B cell (primary cell): ENCODE measurements at regions of chr17 and their contacts with region 1.

Region 1: GRCh38 chr17:64145757-64146417 is 15.9 kb upstream of the ERN1 start:
- DNase-seq: peak; percentile 98
- ATAC-seq: peak; percentile 93
- H3K4me3 ChIP-seq: peak overlapping the region; percentile 77 to 95 (median 92)
- H3K4me3 Mint-ChIP-seq: no peak overlapping the region
- H3K27ac ChIP-seq: peak overlapping the region; percentile 86 to 88
- H3K27ac Mint-ChIP-seq: no peak overlapping the region
- H3K4me1 ChIP-seq: peaks cover 14 to 18% of the 10 kb centered on the region in 2 donors
- H3K4me1 Mint-ChIP-seq: peaks cover 15% of the 10 kb centered on the region
- H3K27me3 ChIP-seq: no peaks in the 10 kb centered on the region
- H3K27me3 Mint-ChIP-seq: no peaks in the 10 kb centered on the region
- CTCF ChIP-seq: no peak

Region 2: GRCh38 chr17:63773381-63774140 is 372.3 kb before region 1 on chr17 and contains the start of gene CCDC47:
- CTCF ChIA-PET with region 1: no interaction called
- POLR2A ChIA-PET with region 1: interaction called, 9 read pairs
- intact Hi-C with region 1: loop called (anchors 5 kb)
- DNase-seq: peak; percentile 99
- ATAC-seq: peak; percentile 78
- H3K4me3 ChIP-seq: peak within 1 kb of the TSS; percentile 78 to 99 (median 90)
- H3K4me3 Mint-ChIP-seq: peak within 1 kb of the TSS; percentile 98
- H3K27ac ChIP-seq: peak within 1 kb of the TSS; percentile 78 to 94
- H3K27ac Mint-ChIP-seq: peak within 1 kb of the TSS; percentile 99
- H3K4me1 ChIP-seq: peaks cover 28 to 34% of the 10 kb centered on the region in 2 donors
- H3K4me1 Mint-ChIP-seq: peaks cover 51% of the 10 kb centered on the region
- H3K27me3 ChIP-seq: no peaks in the 10 kb centered on the region
- H3K27me3 Mint-ChIP-seq: no peaks in the 10 kb centered on the region
- CTCF ChIP-seq: no peak
- total RNA-seq, gene CCDC47: 36.2 and 39.7 TPM in 2 replicates

Region 3: DNA sequence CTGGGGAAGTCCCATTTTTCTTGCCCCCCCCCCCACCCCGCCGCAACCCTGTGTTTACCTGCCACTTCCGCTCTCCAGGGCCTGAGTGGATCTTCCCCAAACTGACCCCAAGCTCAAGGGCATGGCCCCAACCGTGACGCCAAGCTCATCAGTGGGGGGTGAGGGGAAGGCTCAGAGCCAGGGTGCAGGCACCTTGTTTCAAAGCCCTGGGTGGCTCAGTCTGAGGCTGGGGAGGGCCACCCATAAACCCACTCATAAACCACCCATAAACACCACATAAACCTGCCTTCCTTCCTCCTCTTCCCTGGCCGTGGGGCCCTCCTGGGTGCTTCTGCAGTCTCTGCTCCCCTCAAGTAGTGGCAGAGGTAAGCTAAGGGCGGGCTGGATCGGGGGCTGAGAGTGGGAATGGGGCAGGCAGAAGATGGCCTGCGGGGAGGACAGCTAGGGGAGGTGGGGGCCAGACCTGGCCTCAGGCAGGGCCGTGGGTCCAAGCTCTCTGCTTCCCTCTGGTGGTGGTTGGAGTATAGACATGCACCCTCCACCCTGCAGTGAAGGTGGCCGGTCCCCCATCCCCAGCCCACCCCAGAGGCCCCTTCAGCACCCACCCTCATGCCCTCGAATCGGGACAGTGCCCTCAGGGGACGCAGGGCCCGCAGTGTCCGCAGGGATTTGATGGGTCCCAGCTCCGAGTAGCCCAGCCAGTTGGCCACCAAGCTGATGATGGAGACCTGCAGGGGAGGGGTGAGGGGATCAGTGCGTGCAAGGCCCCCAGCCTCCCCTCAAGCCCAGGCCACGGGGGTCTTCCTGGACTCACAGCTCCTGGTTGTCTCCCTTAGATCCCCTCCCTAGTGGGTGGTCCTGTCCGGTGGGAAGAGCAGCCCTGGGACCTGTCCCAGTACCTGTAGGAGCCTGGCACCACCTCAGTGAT is 199.2 kb before region 1 on chr17:
- CTCF ChIA-PET with region 1: interaction called, 8 read pairs
- POLR2A ChIA-PET with region 1: interaction called, 10 read pairs
- intact Hi-C with region 1: no loop called
- DNase-seq: peak; percentile 87
- ATAC-seq: peak; percentile 70
- H3K4me3 ChIP-seq: peak overlapping the region; percentile 20 to 59 (median 41)
- H3K4me3 Mint-ChIP-seq: peak overlapping the region; percentile 89
- H3K27ac ChIP-seq: peak overlapping the region; percentile 72 to 84
- H3K27ac Mint-ChIP-seq: peak overlapping the region; percentile 99
- H3K4me1 ChIP-seq: peaks cover 35 to 70% of the 10 kb centered on the region in 2 donors
- H3K4me1 Mint-ChIP-seq: peaks cover 46% of the 10 kb centered on the region
- H3K27me3 ChIP-seq: no peaks in the 10 kb centered on the region
- H3K27me3 Mint-ChIP-seq: no peaks in the 10 kb centered on the region
- CTCF ChIP-seq: peak; percentile 92

Region 4: DNA sequence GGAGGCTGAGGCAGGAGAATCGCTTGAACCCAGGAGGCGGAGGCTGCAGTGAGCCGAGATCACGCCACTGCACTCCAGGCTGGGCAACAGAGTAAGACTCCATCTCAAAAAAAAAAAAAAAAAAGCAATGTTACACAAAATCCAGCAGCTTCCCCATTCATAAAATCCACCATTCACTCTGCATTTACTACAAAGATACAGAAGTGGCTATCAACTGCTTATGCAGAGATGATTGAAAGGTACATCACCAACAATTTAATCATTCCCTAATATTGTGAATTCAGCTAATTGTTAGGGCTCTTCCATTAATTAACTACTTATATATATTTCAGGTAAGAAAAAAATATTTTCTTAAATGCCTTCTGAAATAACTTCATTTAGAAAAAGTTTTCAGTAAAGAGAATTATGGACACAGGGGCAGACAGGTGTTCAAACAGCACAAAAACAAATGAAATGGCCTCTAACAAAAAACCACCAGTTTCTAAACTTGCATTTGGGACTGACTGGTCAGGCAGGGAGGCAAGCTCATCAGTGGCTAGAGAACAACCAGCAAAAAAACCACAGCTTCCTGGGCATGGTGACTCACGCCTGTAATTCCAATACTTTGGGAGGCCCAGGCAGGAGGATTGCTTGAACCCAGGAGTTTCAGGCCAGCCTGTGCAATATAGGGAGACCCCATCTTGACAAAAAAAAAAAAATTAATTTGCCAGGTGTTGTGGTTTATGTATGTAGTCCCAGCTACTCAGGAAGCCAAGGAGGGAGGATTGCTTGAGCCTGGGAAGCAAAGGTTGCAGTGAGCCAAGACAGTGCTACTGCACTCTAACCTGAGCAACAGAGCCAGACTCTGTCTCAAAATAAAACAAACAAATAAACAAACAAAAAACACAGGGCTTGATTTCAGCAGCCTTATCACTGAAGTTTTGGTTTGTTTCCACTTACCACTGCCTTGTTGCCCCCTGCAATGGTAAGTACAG is 42.2 kb before region 1 on chr17:
- CTCF ChIA-PET with region 1: no interaction called
- POLR2A ChIA-PET with region 1: no interaction called
- intact Hi-C with region 1: no loop called
- DNase-seq: no peak
- ATAC-seq: no peak
- H3K4me3 ChIP-seq: no peak overlapping the region
- H3K4me3 Mint-ChIP-seq: no peak overlapping the region
- H3K27ac ChIP-seq: no peak overlapping the region
- H3K27ac Mint-ChIP-seq: no peak overlapping the region
- H3K4me1 ChIP-seq: no peaks in the 10 kb centered on the region
- H3K4me1 Mint-ChIP-seq: no peaks in the 10 kb centered on the region
- H3K27me3 ChIP-seq: no peaks in the 10 kb centered on the region
- H3K27me3 Mint-ChIP-seq: no peaks in the 10 kb centered on the region
- CTCF ChIP-seq: no peak

Region 5: DNA sequence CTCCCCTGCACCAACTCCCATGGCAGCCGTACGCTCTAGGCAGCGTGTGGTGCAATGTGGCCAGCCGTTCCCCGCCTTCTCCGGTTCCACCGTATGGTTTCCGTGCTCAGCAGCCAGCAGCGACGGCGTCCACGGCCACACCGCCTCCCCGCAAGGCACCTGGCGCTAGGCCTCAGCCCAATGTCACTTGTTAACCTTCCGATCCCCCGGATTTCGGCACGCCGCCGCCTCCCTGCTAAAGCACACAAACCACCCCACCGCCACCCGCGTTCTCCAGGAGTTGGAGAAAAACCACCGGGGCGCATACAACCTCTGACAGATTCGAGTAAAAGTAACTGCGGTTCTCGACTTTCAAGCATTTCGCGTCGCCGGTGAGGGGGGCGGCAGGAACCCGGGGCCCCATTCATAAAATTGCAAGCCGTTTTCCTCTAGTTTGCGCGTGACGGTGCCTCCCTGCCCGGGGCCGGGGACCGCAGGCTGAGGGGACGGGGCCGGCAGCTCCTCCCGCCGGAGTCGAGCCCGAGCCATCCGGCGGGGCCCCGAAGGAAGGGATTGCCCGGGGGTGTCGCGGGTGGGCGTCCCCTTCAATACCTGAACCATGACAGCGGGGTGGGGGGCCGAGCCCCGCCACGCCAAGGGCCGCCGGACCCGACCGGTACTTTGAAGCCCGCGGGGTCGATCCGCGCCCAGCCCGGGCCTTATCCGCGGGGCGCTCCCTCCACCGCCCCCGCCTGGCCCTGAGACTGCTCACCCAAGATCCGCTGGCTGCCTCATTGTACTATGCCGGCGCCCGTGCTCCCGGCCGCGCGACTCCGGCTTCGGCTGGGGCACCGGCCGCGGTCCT is 116.8 kb after region 1 on chr17 and contains the start of gene TEX2:
- CTCF ChIA-PET with region 1: interaction called, 5 read pairs
- POLR2A ChIA-PET with region 1: interaction called, 5 read pairs
- intact Hi-C with region 1: loop called (anchors 1 kb)
- DNase-seq: peak; percentile 67
- ATAC-seq: peak; percentile 25
- H3K4me3 ChIP-seq: peak within 1 kb of the TSS; percentile 54 to 89 (median 74)
- H3K4me3 Mint-ChIP-seq: peak within 1 kb of the TSS; percentile 92
- H3K27ac ChIP-seq: peak within 1 kb of the TSS; percentile 48 to 68
- H3K27ac Mint-ChIP-seq: peak within 1 kb of the TSS; percentile 90
- H3K4me1 ChIP-seq: peaks cover 10 to 22% of the 10 kb centered on the region in 2 donors
- H3K4me1 Mint-ChIP-seq: peaks cover 28% of the 10 kb centered on the region
- H3K27me3 ChIP-seq: peaks cover 0 to 6% (median 0%) of the 10 kb centered on the region in 4 experiments
- H3K27me3 Mint-ChIP-seq: peaks cover 6% of the 10 kb centered on the region
- CTCF ChIP-seq: no peak
- total RNA-seq, gene TEX2: 6.9 and 7.6 TPM in 2 replicates